Sciatic nerve (tissue), 2 donors: ENCODE measurements at regions of chr10 and their contacts with region 1.

Region 1: DNA sequence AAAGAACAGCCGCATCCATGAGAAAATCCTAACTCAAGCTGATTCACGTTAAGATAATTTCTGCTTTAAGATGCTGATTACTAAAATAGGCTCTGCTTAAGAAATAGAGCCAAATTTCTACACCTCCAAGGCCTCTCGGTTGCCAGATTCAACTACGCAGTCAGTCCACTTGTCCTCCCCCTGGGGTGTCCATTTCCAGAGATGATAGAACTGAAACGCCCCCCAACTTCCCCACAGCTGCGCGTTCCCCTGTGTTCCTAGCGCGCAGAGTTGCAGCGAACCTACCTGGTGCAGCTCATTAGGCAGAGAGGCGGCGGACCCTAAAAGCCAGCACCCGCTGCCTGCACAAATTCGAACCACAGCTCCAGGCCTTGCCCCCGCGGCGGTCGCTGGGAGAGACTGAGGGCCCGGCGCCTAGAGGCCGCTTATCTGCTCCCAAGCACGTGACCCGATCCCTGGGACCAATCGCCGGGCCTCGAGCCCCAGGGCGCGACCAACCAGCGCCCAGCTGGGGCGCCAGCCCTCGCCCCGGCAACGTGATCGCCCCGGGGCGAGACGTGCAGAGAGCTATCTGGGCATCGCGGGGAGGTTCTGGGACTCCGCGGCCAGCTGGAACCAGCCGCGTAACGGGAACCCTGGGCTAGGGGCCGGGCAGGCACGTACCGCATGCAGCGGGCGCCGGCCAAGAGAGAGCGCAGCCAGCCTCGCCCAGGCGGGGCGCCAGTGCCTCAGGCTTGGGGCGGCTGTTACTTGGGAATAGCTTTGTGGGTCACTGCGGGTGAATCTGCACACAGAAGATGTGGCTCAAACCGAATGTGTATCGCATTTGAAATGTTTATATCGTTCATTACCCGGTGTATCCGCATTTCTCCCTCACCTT is at the start of gene PPP1R3C:
- DNase-seq: peak; percentile 90
- ATAC-seq: peak; percentile 98
- total RNA-seq, gene PPP1R3C: 10.9 TPM

Region 2: DNA sequence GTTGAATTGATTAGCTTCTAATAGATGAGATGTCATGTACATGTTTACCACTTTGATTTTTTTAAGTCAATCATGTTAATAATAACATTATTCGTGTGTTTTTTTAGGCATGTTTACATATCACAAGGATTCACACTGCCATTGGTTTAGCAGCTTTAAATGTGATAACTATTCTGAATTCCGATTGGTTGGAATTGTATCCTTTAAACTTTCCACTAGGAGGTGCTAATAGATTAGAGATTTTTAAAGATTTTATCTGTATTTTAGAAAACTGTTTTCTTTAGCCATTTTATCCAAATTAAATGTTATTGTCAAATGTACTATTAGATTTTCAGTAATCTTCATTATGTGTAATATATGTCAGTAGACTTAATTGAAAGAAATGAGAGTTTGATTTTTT is 139.6 kb before region 1 on chr10:
- intact Hi-C with region 1: loop called (anchors 10 kb)
- DNase-seq: no peak
- ATAC-seq: no peak

Region 3: GRCh38 chr10:91816981-91817380 is 184.1 kb after region 1 on chr10:
- intact Hi-C with region 1: no loop called
- DNase-seq: no peak
- ATAC-seq: no peak